Activated CD4-positive, alpha-beta memory T cell treated with anti-CD3 and anti-CD28 coated beads for 36 hours (primary cell): ENCODE measurements at regions of chr14 and their contacts with region 1.

Region 1: DNA sequence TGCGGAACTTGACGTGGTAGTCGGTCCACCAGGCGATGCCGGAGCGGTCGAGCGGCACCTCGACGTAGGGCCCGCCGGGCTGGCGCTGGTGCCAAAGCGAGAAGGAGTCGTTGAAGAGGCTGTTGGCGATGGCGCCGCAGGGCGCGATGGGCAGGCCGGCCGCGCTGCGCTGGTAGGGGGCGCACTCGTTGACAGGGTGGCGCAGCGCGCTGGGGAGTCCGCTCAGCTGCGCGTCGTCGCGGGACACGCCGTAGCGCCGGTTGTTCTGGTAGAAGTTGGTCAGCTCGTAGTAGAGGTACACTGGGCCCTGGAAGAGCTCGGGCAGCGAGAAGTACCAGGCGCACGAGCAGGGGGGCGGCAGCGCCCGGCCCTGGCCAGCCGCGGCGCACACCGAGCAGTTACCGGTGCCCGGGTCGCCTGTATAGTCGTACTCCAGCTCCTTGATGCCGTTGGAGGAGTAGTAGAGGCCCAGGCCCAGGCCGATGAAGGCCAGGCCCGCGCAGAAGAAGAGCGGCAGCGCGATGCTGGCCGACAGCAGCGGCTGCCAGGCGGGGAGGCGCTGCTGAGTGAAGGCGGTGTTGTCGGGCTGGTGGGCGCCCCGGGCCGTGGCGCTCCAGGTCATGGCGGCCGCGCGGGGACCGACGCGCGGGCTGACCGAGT is 482 bp downstream of the TMEM30B start:
- DNase-seq: peak; percentile 82
- H3K4me3 Mint-ChIP-seq: peak overlapping the region; percentile 87
- H3K27ac Mint-ChIP-seq: peak overlapping the region; percentile 70
- H3K4me1 Mint-ChIP-seq: peaks cover 34% of the 10 kb centered on the region
- H3K27me3 Mint-ChIP-seq: peaks cover 3% of the 10 kb centered on the region

Region 2: DNA sequence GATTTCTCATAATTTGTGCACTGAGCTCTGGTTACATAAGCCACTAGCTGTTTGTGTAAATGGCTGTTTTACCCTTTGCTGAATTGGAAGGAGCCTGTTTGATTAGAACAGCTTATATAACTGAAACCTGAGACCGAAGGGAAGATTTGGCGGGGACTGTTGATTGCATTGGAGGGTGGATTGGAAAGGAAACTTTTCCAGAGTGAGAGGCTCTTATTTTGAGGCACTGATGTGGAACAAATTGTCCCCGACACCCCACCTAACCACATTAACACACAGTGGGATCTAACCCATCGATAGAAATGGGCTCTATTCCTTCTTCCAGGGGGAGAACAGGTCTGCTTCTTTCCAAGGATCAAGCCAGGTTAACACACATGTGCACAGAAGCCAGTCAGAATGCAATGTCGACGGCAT is 51.2 kb before region 1 on chr14:
- CTCF ChIA-PET with region 1: no interaction called
- POLR2A ChIA-PET with region 1: no interaction called
- intact Hi-C with region 1: no loop called
- DNase-seq: no peak
- H3K4me3 Mint-ChIP-seq: no peak overlapping the region
- H3K27ac Mint-ChIP-seq: no peak overlapping the region
- H3K4me1 Mint-ChIP-seq: peaks cover 2% of the 10 kb centered on the region
- H3K27me3 Mint-ChIP-seq: peaks cover 20% of the 10 kb centered on the region

Region 3: GRCh38 chr14:61269321-61270083 is 11.2 kb before region 1 on chr14:
- CTCF ChIA-PET with region 1: interaction called, 85 read pairs
- POLR2A ChIA-PET with region 1: no interaction called
- intact Hi-C with region 1: loop called (anchors 1 kb)
- DNase-seq: peak; percentile 86
- H3K4me3 Mint-ChIP-seq: peak overlapping the region; percentile 60
- H3K27ac Mint-ChIP-seq: no peak overlapping the region
- H3K4me1 Mint-ChIP-seq: no peaks in the 10 kb centered on the region
- H3K27me3 Mint-ChIP-seq: peaks cover 28% of the 10 kb centered on the region